Thyroid gland (tissue), 4 donors: ENCODE measurements at regions of chr12 and their contacts with region 1.

Region 1: GRCh38 chr12:5083955-5084849 is 40.5 kb downstream of the KCNA5 start:
- DNase-seq: peak in 1 of 2 donors; percentile 25
- H3K4me3 ChIP-seq: no peak overlapping the region
- H3K27ac ChIP-seq: no peak overlapping the region
- H3K4me1 ChIP-seq: peaks cover 0 to 3% of the 10 kb centered on the region in 2 donors
- H3K27me3 ChIP-seq: no peaks in the 10 kb centered on the region
- CTCF ChIP-seq: peak; percentile 33 to 97 (median 74)
- POLR2A ChIP-seq: no peak

Region 2: GRCh38 chr12:4857472-4858291 is 226.5 kb before region 1 on chr12:
- intact Hi-C with region 1: loop called (anchors 10 kb)
- DNase-seq: peak; percentile 78
- H3K4me3 ChIP-seq: no peak overlapping the region
- H3K27ac ChIP-seq: peak overlapping the region in 1 of 3 donors; percentile 26
- H3K4me1 ChIP-seq: peaks cover 9 to 13% of the 10 kb centered on the region in 2 donors
- H3K27me3 ChIP-seq: no peaks in the 10 kb centered on the region
- CTCF ChIP-seq: peak; percentile 67 to 86 (median 78)
- POLR2A ChIP-seq: no peak

Region 3: GRCh38 chr12:5022465-5023061 is 61.6 kb before region 1 on chr12:
- intact Hi-C with region 1: loop called (anchors 2 kb)
- DNase-seq: peak; percentile 56 to 60
- H3K4me3 ChIP-seq: no peak overlapping the region
- H3K27ac ChIP-seq: no peak overlapping the region
- H3K4me1 ChIP-seq: no peaks in the 10 kb centered on the region
- H3K27me3 ChIP-seq: no peaks in the 10 kb centered on the region
- CTCF ChIP-seq: peak; percentile 77 to 96 (median 92)
- POLR2A ChIP-seq: no peak